HEK293 (cell line): ENCODE measurements at regions of chr17 and their contacts with region 1.

Region 1: GRCh38 chr17:48625495-48626244 is 488 bp downstream of the HOXB9 start:
- H3K4me3 ChIP-seq: peak overlapping the region; percentile 78
- H3K27ac ChIP-seq: peak overlapping the region; percentile 100
- H3K4me1 ChIP-seq: peaks cover 21% of the 10 kb centered on the region
- CTCF ChIP-seq: no peak

Region 2: DNA sequence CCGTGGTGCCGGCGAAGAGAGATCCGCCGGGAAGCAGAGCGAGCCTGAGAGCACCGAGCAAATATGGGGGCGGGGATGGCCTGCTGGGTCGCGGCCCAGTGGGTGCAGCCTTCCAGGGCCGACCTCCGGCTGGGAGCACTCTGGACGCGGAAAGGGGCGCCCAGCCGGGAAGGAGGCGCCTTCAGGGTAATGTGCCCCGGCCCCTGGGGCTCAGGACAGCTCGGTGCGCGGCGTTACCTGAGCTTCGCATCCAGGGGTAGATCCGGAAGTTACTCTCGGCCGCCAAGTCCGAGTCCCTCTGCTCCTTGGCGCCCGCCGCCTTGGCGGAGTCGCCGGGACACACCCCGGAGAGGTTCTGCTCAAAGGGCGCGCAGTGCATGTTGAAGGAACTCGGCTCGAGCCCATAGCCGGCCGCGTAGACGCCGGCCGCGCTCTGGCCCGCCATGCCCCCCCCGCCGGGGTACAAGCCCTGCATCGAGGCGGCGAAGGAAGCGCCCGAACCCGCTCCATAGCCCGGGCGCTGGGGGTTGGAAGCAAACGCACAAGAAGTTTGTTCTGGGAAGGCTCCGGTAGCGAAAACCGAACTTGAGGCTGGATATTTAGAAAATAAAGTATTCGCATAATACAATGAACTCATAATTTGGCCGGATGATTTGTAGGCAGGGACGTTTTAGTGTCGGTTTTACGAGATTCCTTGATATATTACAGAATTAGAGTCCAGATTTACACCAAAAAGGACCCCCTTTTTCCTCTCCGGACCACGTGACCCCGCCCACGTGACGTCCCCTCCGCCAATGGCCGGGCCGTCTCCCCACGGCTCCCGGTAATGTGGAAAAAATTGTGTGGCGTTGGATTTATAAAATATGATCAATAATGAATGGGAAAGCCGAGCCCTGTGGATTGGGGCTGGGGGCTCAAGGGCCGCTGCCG is 15.1 kb before region 1 on chr17 and contains the start of gene HOXB7:
- CTCF ChIA-PET with region 1: interaction called, 5 read pairs
- POLR2A ChIA-PET with region 1: interaction called, 15 read pairs
- H3K4me3 ChIP-seq: peak within 1 kb of the TSS; percentile 72
- H3K27ac ChIP-seq: peak within 1 kb of the TSS; percentile 94
- H3K4me1 ChIP-seq: peaks cover 32% of the 10 kb centered on the region
- CTCF ChIP-seq: 0 out of 2 replicates have a peak, but pooled peaks have one; percentile 18

Region 3: GRCh38 chr17:48636177-48637018 is 10.7 kb after region 1 on chr17:
- CTCF ChIA-PET with region 1: interaction called, 37 read pairs
- POLR2A ChIA-PET with region 1: interaction called, 38 read pairs
- H3K4me3 ChIP-seq: no peak overlapping the region
- H3K27ac ChIP-seq: peak overlapping the region; percentile 49
- H3K4me1 ChIP-seq: no peaks in the 10 kb centered on the region
- CTCF ChIP-seq: peak; percentile 49; the same call in 1 of the 2 replicates

Region 4: GRCh38 chr17:48646183-48647102 is 20.8 kb after region 1 on chr17:
- CTCF ChIA-PET with region 1: no interaction called
- POLR2A ChIA-PET with region 1: interaction called, 17 read pairs
- H3K4me3 ChIP-seq: peak overlapping the region; percentile 80
- H3K27ac ChIP-seq: peak overlapping the region; percentile 93
- H3K4me1 ChIP-seq: peaks cover 6% of the 10 kb centered on the region
- CTCF ChIP-seq: peak; percentile 9; the same call in 1 of the 2 replicates

Region 5: DNA sequence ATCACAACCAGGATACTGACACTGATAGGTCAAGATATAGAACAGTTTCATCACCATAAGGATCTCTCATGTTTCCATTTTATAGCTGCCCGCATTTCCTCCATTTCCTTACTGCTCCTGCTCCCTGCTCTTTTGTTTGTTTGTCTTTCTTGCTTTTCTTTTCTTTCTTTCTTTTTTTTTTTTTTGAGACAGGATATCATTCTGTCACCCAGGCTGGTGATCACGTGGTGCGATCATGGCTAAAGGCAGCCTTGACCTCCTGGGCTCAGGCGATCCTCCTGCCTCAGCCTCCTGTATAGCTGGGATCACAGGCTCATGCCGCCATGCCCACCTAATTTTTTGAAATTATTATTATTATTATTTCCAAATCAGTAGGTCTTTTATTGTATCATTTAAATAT is 65.0 kb after region 1 on chr17:
- CTCF ChIA-PET with region 1: no interaction called
- POLR2A ChIA-PET with region 1: no interaction called
- H3K4me3 ChIP-seq: no peak overlapping the region
- H3K27ac ChIP-seq: no peak overlapping the region
- H3K4me1 ChIP-seq: no peaks in the 10 kb centered on the region
- CTCF ChIP-seq: no peak

Region 6: DNA sequence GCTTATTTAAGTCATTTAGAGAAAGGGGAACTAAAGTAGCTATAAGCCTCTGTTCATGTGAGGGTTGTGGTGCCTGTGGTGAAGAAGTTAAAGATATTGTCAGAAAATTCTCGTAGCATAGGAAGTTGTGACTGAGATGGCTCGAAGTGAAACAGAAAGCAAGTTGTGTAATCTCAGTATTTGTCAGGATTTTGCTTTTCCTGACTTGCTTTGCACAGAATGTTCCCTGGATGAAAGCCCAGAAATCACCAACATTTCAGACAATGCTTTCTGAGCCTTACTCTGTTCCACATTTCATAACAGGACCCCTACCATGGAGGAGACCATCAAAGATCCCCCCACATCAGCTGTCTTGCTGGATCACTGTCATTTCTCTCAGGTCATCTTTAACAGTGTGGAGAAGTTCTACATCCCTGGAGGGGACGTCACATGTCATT is 215.7 kb after region 1 on chr17:
- CTCF ChIA-PET with region 1: no interaction called
- POLR2A ChIA-PET with region 1: no interaction called
- H3K4me3 ChIP-seq: no peak overlapping the region
- H3K27ac ChIP-seq: no peak overlapping the region
- H3K4me1 ChIP-seq: peaks cover 4% of the 10 kb centered on the region; the same call in 1 of the 2 replicates
- CTCF ChIP-seq: no peak

Region 7: GRCh38 chr17:48892940-48893645 is 267.4 kb after region 1 on chr17:
- CTCF ChIA-PET with region 1: no interaction called
- POLR2A ChIA-PET with region 1: no interaction called
- H3K4me3 ChIP-seq: peak overlapping the region; percentile 83
- H3K27ac ChIP-seq: peak overlapping the region; percentile 54; the same call in 1 of the 2 replicates
- H3K4me1 ChIP-seq: 0 out of 2 replicates have a peak, but pooled peaks cover 3% of the 10 kb centered on the region
- CTCF ChIP-seq: peak; percentile 39; the same call in 1 of the 2 replicates